Panc1 (cell line): ENCODE measurements at regions of chr5 and their contacts with region 1.

Region 1: GRCh38 chr5:27612161-27612560 is 573.8 kb upstream of the CDH9 start:
- DNase-seq: no peak
- ATAC-seq: no peak
- H3K4me3 ChIP-seq: no peak overlapping the region
- H3K27ac ChIP-seq: no peak overlapping the region
- H3K4me1 ChIP-seq: no peaks in the 10 kb centered on the region
- H3K27me3 ChIP-seq: no peaks in the 10 kb centered on the region
- CTCF ChIP-seq: no peak

Region 2: DNA sequence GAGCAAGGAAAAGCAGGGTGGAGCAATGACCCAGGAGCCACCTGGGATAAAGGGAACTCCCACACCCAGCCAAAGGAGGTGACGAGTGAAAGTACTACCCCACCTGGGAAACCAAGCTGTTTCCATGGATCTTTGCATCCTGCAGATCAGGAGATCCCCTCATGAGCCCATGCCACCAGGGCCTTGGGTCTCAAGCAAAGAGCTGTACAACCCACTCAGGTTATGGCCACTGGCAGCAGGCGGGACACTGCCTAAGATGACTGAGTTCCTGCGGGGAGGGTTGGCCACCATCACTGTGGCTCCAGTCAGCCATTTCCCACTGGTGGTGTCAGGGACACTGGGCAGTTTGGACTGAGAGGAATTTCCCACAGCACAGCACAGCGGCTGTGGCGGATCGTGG is 799.4 kb before region 1 on chr5:
- CTCF ChIA-PET with region 1: no interaction called
- POLR2A ChIA-PET with region 1: interaction called, 18 read pairs
- in situ Hi-C with region 1: no loop called
- intact Hi-C with region 1: no loop called
- DNase-seq: no peak
- ATAC-seq: no peak
- H3K4me3 ChIP-seq: no peak overlapping the region
- H3K27ac ChIP-seq: no peak overlapping the region
- H3K4me1 ChIP-seq: no peaks in the 10 kb centered on the region
- H3K27me3 ChIP-seq: no peaks in the 10 kb centered on the region
- CTCF ChIP-seq: no peak